ENCODE measurements at regions of chr5 and their contacts with region 1.

Region 1: DNA sequence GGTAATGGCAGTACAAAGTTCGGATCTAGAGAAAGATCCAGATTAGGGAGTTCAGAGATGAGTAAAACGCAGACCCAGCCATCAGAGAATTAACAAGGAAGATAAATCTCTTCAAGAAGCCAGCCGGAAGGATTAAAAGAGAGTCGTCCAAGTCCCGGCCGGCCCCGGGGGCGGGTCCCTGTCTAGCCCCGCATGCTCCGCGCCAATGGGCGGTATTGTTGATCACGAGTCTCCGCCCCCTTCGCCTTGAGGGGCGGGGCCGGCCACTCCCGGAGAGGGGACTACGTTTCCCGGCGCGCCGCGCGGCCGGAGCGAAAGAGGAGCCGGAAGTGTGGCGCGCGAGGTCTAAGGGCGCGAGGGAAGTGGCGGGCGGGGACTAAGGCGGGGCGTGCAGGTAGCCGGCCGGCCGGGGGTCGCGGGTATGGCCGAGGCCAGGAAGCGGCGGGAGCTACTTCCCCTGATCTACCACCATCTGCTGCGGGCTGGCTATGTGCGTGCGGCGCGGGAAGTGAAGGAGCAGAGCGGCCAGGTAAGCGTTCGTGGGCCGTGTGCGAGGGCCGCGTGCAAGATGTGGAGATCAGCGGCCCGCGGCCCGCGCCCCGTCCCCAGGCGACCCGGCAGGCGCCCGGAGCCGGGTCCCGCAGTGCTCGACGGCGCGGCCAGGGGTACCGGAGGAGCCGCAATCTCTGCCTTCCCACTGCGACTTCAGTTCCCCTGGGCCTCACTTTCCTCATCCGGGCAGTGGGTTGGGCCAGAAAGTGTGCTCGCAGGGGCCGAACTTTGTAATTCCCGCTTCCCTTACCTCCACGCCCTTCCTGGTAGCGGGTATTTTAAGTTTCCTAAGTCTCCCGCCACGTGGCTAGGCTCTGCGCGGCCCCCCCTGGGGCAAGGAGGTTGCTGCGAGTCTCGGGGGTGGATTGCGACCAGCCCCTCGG is at the start of gene TCOF1:
- DNase-seq: peak; percentile 97 to 98
- ATAC-seq: peak; percentile 99 to 100 (median 99)
- H3K4me3 ChIP-seq: peak within 1 kb of the TSS; percentile 64
- H3K4me3 Mint-ChIP-seq: peak within 1 kb of the TSS; percentile 85
- H3K27ac ChIP-seq: peak within 1 kb of the TSS; percentile 46
- H3K27ac Mint-ChIP-seq: peak within 1 kb of the TSS; percentile 84 to 85
- H3K4me1 ChIP-seq: peaks cover 22% of the 10 kb centered on the region
- H3K4me1 Mint-ChIP-seq: peaks cover 12 to 33% of the 10 kb centered on the region in 2 donors
- H3K27me3 ChIP-seq: no peaks in the 10 kb centered on the region
- H3K27me3 Mint-ChIP-seq: peaks cover 0 to 3% of the 10 kb centered on the region in 2 donors
- CTCF ChIP-seq: no peak
- total RNA-seq, gene TCOF1: 51.5 to 62.6 (median 51.7) TPM

Region 2: GRCh38 chr5:148805326-148806290 is 1552.0 kb before region 1 on chr5:
- intact Hi-C with region 1: no loop called
- DNase-seq: no peak
- ATAC-seq: no peak
- H3K4me3 ChIP-seq: no peak overlapping the region
- H3K4me3 Mint-ChIP-seq: no peak overlapping the region
- H3K27ac ChIP-seq: no peak overlapping the region
- H3K27ac Mint-ChIP-seq: peak overlapping the region in 1 of 2 donors; percentile 3
- H3K4me1 ChIP-seq: peaks cover 35% of the 10 kb centered on the region
- H3K4me1 Mint-ChIP-seq: peaks cover 20 to 21% of the 10 kb centered on the region in 2 donors
- H3K27me3 ChIP-seq: no peaks in the 10 kb centered on the region
- H3K27me3 Mint-ChIP-seq: peaks cover 0 to 11% of the 10 kb centered on the region in 2 donors
- CTCF ChIP-seq: no peak

Region 3: DNA sequence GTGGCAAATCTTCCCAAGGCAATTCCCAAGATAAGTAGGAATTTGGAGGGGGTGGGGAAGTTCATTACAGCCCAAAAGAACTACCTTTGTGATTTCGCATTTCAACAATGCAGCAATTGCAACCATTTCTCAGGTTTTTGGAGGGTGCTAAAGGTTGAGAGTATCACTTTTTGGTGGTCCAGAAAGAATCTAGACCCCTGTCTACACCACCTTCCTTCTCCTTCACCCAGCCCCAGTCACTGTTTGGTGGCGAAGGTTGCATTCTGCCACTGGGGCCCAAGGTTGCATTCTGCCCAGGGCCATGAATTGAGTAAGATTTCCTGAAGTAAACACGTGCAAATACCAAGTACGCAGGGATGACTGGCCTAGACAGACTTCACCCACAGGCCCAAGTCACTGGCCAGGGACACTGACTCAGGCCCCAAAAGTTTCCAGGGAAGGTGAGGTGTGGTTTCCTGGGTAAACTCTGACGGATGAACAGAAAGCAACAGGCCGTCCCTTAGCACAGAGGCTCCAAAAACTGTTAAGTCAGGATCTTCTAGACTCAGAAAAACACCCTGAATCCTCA is 418.7 kb before region 1 on chr5:
- intact Hi-C with region 1: no loop called
- DNase-seq: no peak
- ATAC-seq: peak in 1 of 3 donors; percentile 65
- H3K4me3 ChIP-seq: no peak overlapping the region
- H3K4me3 Mint-ChIP-seq: no peak overlapping the region
- H3K27ac ChIP-seq: no peak overlapping the region
- H3K27ac Mint-ChIP-seq: no peak overlapping the region
- H3K4me1 ChIP-seq: no peaks in the 10 kb centered on the region
- H3K4me1 Mint-ChIP-seq: no peaks in the 10 kb centered on the region
- H3K27me3 ChIP-seq: no peaks in the 10 kb centered on the region
- H3K27me3 Mint-ChIP-seq: peaks cover 10 to 27% of the 10 kb centered on the region in 2 donors
- CTCF ChIP-seq: no peak

Region 4: GRCh38 chr5:150409638-150410523 is 52.3 kb after region 1 on chr5:
- intact Hi-C with region 1: loop called (anchors 2 kb)
- DNase-seq: peak in 1 of 2 donors; percentile 77
- ATAC-seq: no peak
- H3K4me3 ChIP-seq: peak overlapping the region; percentile 89
- H3K4me3 Mint-ChIP-seq: peak overlapping the region; percentile 98
- H3K27ac ChIP-seq: peak overlapping the region; percentile 98
- H3K27ac Mint-ChIP-seq: peak overlapping the region; percentile 99 to 100
- H3K4me1 ChIP-seq: peaks cover 81% of the 10 kb centered on the region
- H3K4me1 Mint-ChIP-seq: peaks cover 48 to 53% of the 10 kb centered on the region in 2 donors
- H3K27me3 ChIP-seq: no peaks in the 10 kb centered on the region
- H3K27me3 Mint-ChIP-seq: no peaks in the 10 kb centered on the region
- CTCF ChIP-seq: no peak

Measured in natural killer cell (primary cell).